ENCODE measurements at regions of chr17 and their contacts with region 1.

Region 1: GRCh38 chr17:50693036-50693682 is 14.6 kb downstream of the ANKRD40 start:
- DNase-seq: peak; percentile 94
- ATAC-seq: peak; percentile 67
- H3K4me3 ChIP-seq: peak overlapping the region; percentile 50
- H3K27ac ChIP-seq: peak overlapping the region; percentile 86
- H3K4me1 ChIP-seq: peaks cover 91% of the 10 kb centered on the region
- H3K27me3 ChIP-seq: no peaks in the 10 kb centered on the region
- CTCF ChIP-seq: no peak

Region 2: GRCh38 chr17:50487213-50488096 is 205.7 kb before region 1 on chr17:
- CTCF ChIA-PET with region 1: interaction called, 9 read pairs
- POLR2A ChIA-PET with region 1: interaction called, 17 read pairs
- intact Hi-C with region 1: loop called (anchors 1 kb)
- DNase-seq: peak; percentile 90
- ATAC-seq: peak; percentile 96
- H3K4me3 ChIP-seq: no peak overlapping the region
- H3K27ac ChIP-seq: no peak overlapping the region; the same call in 1 of the 2 replicates
- H3K4me1 ChIP-seq: peaks cover 22% of the 10 kb centered on the region
- H3K27me3 ChIP-seq: no peaks in the 10 kb centered on the region
- CTCF ChIP-seq: no peak

Region 3: DNA sequence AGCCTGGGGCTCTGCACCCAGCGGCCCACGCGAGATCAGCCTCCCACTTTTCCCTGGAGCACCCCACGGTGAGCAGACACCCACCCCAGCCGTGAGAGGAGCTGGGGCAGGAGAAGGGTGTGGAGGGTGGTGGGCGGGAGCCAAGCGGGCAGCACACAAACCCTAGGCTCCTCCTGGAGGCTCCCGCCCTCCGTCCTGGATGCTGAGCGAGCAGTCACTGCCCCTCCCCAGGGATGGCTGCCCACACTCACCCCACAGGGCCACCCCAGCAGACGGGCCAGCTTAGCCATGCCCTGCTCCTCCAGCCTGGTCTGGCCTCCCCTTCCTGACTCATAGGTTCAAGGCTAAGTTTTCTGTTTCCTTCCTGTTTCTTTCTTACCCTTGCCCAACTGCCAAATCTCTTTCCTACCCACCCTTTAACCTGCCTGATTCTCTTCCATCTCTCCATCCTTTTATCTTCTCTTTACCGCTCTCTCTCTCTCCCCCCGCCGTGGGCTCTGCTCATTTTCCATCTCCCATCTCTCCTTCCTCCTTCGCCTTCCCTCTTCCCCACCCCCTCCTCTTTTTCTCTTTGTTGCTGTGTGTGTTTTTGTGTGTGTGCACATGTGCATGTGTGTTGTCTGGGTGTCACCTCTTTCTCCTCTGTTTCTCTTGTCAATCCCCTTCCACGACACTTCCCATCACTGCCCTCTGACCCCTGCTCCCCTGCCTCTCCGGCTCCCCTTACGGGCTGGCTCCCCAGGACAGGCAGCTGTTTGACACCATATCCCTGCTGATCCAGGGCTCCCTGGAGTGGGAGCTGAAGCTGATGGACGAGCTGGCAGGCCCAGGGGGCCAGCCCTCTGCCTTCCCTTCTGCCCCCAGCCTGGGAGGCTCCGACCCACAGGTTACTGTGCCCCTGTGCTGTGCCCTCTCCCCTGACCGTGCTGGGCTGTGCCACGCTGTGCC is 73.9 kb before region 1 on chr17:
- CTCF ChIA-PET with region 1: no interaction called
- POLR2A ChIA-PET with region 1: no interaction called
- intact Hi-C with region 1: no loop called
- DNase-seq: no peak
- ATAC-seq: no peak; the same call in none of the 2 replicates
- H3K4me3 ChIP-seq: no peak overlapping the region
- H3K27ac ChIP-seq: no peak overlapping the region
- H3K4me1 ChIP-seq: peaks cover 3% of the 10 kb centered on the region; the same call in 1 of the 2 replicates
- H3K27me3 ChIP-seq: no peaks in the 10 kb centered on the region
- CTCF ChIP-seq: no peak

Region 4: DNA sequence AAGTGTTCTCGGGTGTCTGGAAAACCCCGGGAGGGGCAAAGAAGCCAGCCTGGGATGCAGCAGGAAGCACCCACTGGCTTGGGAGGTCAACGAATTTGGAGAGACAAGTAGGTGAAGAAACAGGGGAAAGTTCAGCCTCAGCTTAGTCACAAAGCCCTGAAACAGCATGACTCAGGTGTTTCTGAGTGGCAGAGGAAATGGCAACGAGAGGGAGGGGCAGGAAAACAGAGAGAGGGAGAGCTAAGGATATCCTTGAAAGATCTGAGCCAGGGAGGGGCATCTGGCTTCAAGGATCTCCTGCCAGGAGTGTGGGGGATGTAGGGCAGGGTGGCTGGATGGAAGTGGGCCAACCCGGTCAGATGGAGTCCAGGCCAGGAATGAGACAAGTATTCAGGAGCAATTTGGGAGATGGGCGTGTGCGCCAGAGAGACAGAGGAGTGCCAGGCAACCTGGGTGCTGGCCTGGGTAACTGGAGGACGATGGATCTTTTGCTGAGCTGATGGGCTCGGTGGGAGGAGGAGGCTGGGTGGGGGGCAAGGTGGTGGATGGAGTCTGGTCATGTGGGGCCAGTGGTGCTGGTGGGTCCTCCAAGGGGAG is 31.3 kb before region 1 on chr17:
- CTCF ChIA-PET with region 1: interaction called, 6 read pairs
- POLR2A ChIA-PET with region 1: interaction called, 5 read pairs
- intact Hi-C with region 1: loop called (anchors 1 kb)
- DNase-seq: peak; percentile 100
- ATAC-seq: peak; percentile 76
- H3K4me3 ChIP-seq: peak overlapping the region; percentile 26; the same call in 1 of the 2 replicates
- H3K27ac ChIP-seq: peak overlapping the region; percentile 89
- H3K4me1 ChIP-seq: peaks cover 37% of the 10 kb centered on the region
- H3K27me3 ChIP-seq: no peaks in the 10 kb centered on the region
- CTCF ChIP-seq: no peak

Region 5: GRCh38 chr17:50681263-50682210 is 11.6 kb before region 1 on chr17:
- CTCF ChIA-PET with region 1: interaction called, 3 read pairs
- POLR2A ChIA-PET with region 1: no interaction called
- intact Hi-C with region 1: loop called (anchors 1 kb)
- DNase-seq: peak; percentile 84
- ATAC-seq: peak; percentile 52
- H3K4me3 ChIP-seq: no peak overlapping the region
- H3K27ac ChIP-seq: no peak overlapping the region
- H3K4me1 ChIP-seq: peaks cover 33% of the 10 kb centered on the region
- H3K27me3 ChIP-seq: no peaks in the 10 kb centered on the region
- CTCF ChIP-seq: peak; percentile 86

Region 6: GRCh38 chr17:50721194-50722010 is 28.2 kb after region 1 on chr17:
- CTCF ChIA-PET with region 1: no interaction called
- POLR2A ChIA-PET with region 1: no interaction called
- intact Hi-C with region 1: no loop called
- DNase-seq: no peak
- ATAC-seq: no peak
- H3K4me3 ChIP-seq: peak overlapping the region; percentile 91
- H3K27ac ChIP-seq: no peak overlapping the region
- H3K4me1 ChIP-seq: peaks cover 27% of the 10 kb centered on the region
- H3K27me3 ChIP-seq: no peaks in the 10 kb centered on the region
- CTCF ChIP-seq: no peak

Region 7: GRCh38 chr17:50841949-50842354 is 148.8 kb after region 1 on chr17:
- CTCF ChIA-PET with region 1: interaction called, 4 read pairs
- POLR2A ChIA-PET with region 1: no interaction called
- intact Hi-C with region 1: loop called (anchors 5 kb)
- DNase-seq: peak; percentile 88
- ATAC-seq: peak; percentile 92
- H3K4me3 ChIP-seq: no peak overlapping the region
- H3K27ac ChIP-seq: no peak overlapping the region
- H3K4me1 ChIP-seq: peaks cover 15% of the 10 kb centered on the region; the same call in 1 of the 2 replicates
- H3K27me3 ChIP-seq: no peaks in the 10 kb centered on the region
- CTCF ChIP-seq: peak; percentile 92